Mammary epithelial cell (primary cell): ENCODE measurements at regions of chr6 and their contacts with region 1.

Region 1: DNA sequence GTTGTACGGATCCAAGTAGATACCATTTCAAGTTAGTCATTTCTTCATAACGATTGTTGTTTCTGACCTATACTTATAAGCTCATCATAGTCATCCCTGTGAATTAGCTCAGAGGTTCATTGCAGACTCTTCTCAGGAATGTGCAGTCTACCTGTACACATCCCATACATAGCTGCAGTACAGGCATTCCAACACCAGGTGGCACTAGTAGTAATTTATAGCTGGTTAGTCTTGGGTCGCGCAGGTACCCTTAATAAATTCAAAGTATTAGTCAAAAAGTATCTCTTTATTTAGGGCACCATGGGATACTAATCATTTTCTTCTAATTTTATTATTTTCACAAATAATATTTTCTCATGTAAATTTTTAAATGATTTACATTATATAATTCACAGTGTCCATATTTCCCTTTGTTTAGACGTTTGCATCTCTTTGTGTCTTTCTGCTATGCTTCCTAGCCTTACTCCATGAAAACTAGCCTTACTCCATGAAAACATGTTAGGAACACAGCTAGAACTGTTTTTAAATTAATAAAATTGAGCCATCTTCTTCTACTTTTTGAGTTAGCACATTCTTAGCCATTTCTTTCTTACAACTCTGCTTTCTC is 128.6 kb upstream of the FAM83B start:
- DNase-seq: peak; percentile 81
- H3K4me3 ChIP-seq: peak overlapping the region in 2 of 3 experiments; percentile 37 to 43
- H3K27ac ChIP-seq: peak overlapping the region; percentile 91
- H3K4me1 ChIP-seq: peaks cover 22% of the 10 kb centered on the region
- H3K27me3 ChIP-seq: no peaks in the 10 kb centered on the region
- CTCF ChIP-seq: peak; percentile 82 to 85

Region 2: GRCh38 chr6:54801669-54802068 is 83.7 kb after region 1 on chr6:
- CTCF ChIA-PET with region 1: no interaction called
- dilution Hi-C with region 1: loop called (anchors 5 kb)
- in situ Hi-C with region 1: no loop called
- intact Hi-C with region 1: no loop called
- DNase-seq: peak; percentile 76
- H3K4me3 ChIP-seq: no peak overlapping the region
- H3K27ac ChIP-seq: no peak overlapping the region
- H3K4me1 ChIP-seq: peaks cover 15% of the 10 kb centered on the region
- H3K27me3 ChIP-seq: no peaks in the 10 kb centered on the region
- CTCF ChIP-seq: no peak

Region 3: DNA sequence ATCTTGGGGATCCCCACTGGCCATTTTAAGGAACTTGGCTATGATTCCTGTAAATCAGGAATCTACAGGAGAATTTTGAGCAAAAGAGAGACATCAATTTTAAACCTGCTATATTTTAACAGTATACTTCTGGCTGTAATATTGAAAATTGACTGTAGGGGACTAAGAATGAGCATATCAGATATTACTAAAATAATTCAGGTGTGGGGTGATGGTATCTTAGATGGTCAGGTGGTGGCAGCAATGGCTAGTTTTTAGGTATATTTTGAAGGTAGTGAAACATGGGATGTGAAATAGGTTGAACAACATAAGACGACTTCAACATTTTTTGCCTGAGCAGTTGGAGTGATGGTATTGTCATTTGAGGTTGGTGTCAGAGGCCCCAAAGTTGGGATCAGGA is 160.7 kb after region 1 on chr6:
- CTCF ChIA-PET with region 1: no interaction called
- dilution Hi-C with region 1: no loop called
- in situ Hi-C with region 1: no loop called
- intact Hi-C with region 1: loop called (anchors 5 kb)
- DNase-seq: no peak
- H3K4me3 ChIP-seq: no peak overlapping the region
- H3K27ac ChIP-seq: no peak overlapping the region
- H3K4me1 ChIP-seq: peaks cover 59% of the 10 kb centered on the region
- H3K27me3 ChIP-seq: no peaks in the 10 kb centered on the region
- CTCF ChIP-seq: no peak

Region 4: DNA sequence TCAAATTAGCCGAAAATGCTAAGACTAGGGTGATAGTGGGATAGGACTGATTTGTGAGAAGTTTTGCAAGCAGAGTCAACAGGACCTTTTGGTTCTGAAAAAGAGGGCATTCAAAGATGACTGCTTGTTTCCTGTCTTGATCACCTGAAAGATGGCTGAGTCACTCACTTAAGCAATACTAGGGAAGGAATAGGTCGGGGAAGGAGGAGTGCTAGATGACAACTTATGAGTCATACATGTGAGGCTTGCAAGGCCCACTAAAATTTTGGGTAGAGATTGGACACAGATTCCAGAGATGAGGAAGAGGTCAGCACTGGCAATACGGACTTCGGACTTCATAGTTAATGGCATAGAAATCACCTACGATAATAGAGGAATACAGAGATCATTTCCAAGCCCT is 217.8 kb after region 1 on chr6:
- CTCF ChIA-PET with region 1: no interaction called
- dilution Hi-C with region 1: no loop called
- in situ Hi-C with region 1: no loop called
- intact Hi-C with region 1: loop called (anchors 5 kb)
- DNase-seq: peak; percentile 97
- H3K4me3 ChIP-seq: no peak overlapping the region
- H3K27ac ChIP-seq: peak overlapping the region; percentile 90
- H3K4me1 ChIP-seq: peaks cover 18% of the 10 kb centered on the region
- H3K27me3 ChIP-seq: no peaks in the 10 kb centered on the region
- CTCF ChIP-seq: no peak

Region 5: DNA sequence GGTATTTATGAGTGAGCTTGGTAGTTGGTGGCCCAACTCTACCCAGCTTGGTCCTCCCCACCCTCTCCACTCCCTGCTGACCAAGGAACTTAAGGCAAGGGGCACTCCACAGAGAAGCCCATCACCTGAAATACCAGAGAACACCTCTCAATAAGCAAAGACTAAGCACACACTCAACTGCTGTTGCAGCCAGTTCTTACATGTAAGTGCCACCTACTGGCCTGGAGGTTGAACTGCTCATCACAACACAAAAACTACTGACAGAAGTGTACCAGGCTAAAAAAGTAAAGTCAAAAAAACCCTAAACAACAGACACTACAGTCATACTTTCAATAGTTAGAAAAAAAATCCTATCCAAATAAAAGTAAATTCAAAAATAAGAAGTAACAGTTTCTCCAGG is 274.8 kb after region 1 on chr6:
- CTCF ChIA-PET with region 1: no interaction called
- dilution Hi-C with region 1: no loop called
- in situ Hi-C with region 1: no loop called
- intact Hi-C with region 1: loop called (anchors 2 kb)
- DNase-seq: no peak
- H3K4me3 ChIP-seq: no peak overlapping the region
- H3K27ac ChIP-seq: no peak overlapping the region
- H3K4me1 ChIP-seq: no peaks in the 10 kb centered on the region
- H3K27me3 ChIP-seq: no peaks in the 10 kb centered on the region
- CTCF ChIP-seq: peak; percentile 55 to 77